ENCODE measurements at regions of chr2 and their contacts with region 1.

Region 1: DNA sequence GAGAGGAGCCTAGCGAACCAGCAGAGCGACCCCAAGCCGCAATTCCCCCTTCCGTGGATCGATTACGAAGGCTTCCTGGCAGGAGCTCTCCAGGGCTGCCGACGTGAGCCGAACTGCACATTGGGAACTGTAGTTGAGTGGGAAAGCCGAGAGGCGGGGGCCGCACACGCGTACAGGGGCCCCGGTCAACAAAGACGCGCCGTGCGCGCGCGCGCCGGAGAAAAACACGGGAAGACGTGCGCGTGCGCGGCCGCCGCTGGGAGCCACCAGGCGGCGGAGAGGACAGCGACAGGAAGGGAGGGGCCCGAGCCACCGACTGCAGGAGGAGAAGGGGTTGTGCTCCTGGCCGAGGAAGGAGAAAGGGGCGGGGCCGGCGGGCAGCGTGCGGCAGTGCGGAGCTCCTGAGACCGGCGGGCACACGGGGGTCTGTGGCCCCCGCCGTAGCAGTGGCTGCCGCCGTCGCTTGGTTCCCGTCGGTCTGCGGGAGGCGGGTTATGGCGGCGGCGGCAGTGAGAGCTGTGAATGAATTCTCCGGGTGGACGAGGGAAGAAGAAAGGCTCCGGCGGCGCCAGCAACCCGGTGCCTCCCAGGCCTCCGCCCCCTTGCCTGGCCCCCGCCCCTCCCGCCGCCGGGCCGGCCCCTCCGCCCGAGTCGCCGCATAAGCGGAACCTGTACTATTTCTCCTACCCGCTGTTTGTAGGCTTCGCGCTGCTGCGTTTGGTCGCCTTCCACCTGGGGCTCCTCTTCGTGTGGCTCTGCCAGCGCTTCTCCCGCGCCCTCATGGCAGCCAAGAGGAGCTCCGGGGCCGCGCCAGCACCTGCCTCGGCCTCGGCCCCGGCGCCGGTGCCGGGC is at the start of gene SPAST:
- DNase-seq: peak; percentile 99
- H3K4me3 Mint-ChIP-seq: peak within 1 kb of the TSS; percentile 97
- H3K27ac Mint-ChIP-seq: peak within 1 kb of the TSS; percentile 95
- H3K4me1 Mint-ChIP-seq: peaks cover 21% of the 10 kb centered on the region
- H3K27me3 Mint-ChIP-seq: peaks cover 2% of the 10 kb centered on the region
- total RNA-seq, gene SPAST: 19.5 and 20.9 TPM in 2 replicates

Region 2: DNA sequence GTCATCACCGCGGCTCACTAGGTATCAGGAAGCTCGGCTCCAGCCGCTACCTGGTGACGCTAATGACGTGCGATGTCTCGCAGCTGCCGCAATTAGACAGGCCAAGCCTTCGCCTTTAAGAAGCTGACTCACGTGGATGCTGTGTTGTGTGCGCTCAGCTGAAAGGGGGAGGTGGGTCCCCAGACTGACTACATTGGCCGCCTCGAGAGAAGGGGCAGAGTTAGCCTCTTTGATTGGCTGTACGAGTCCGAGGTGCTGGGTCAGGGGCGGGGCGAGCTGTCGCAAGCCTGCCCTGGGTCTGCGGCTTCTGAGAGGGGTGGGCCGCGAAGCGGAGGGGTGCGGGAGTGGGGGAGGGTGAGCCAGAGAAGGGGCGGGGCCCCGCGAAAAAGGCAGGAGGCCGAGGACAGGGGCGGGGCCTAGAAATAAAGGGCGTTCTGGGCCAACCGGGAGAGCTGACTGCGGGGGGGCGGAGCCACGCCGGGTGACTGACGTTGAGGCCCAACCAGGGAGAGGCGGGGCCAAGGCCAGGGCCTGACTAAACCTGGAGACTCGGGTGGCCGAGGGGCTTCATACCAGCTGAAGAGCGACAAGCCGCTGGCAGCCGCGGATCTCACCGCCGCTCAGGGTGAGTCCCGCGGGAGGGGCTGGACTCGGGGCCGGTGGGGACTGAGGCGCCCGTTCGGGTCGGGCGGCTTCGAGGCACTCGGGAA is 1916.9 kb before region 1 on chr2 and contains the start of gene YPEL5:
- intact Hi-C with region 1: loop called (anchors 5 kb)
- DNase-seq: peak; percentile 100
- H3K4me3 Mint-ChIP-seq: peak within 1 kb of the TSS; percentile 87
- H3K27ac Mint-ChIP-seq: peak within 1 kb of the TSS; percentile 97
- H3K4me1 Mint-ChIP-seq: peaks cover 32% of the 10 kb centered on the region
- H3K27me3 Mint-ChIP-seq: no peaks in the 10 kb centered on the region
- total RNA-seq, gene YPEL5: 16.8 and 19.6 TPM in 2 replicates

Region 3: DNA sequence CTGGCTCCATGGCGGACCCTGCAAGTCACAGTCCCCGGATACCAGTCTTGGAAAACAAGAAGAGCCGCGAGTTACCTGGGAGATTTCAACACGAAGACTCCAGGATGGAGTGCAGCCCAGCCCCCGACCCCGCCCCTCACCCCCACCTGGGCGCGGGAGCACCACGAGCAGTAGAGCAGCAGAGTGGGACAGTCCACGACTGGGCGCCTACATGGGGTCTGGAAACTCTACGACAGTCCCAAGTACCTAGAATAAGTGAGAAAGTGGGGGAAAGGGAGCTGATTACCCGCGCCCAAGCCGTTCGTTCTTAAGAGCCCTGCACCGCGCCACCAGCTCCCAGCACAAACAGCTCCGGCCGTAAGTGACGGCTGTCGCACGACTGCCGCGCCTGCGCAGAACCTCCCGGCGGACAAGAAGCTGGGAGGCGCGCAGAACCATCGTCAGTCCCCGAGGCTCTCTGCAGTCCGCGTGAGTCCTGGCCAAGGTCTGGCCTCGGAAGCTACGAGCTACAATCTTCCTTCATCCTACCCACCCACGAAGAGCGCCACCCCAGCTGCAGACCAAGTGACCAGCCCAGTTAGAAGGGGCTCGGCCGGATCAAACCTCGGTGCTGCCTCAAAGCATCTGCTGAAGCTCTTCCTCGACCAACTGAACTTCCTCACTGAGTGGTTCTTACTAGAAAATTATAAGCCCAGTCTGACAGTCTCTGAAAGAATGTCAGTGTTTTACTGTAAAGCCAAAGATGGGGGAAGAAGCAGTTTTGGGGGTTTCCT is 23.9 kb before region 1 on chr2 and contains the start of gene DPY30:
- intact Hi-C with region 1: loop called (anchors 1 kb)
- DNase-seq: peak; percentile 97
- H3K4me3 Mint-ChIP-seq: peak within 1 kb of the TSS; percentile 97
- H3K27ac Mint-ChIP-seq: peak within 1 kb of the TSS; percentile 92
- H3K4me1 Mint-ChIP-seq: peaks cover 14% of the 10 kb centered on the region
- H3K27me3 Mint-ChIP-seq: no peaks in the 10 kb centered on the region
- total RNA-seq, gene DPY30: 71.8 and 74.4 TPM in 2 replicates

Region 4: GRCh38 chr2:32135409-32135808 is 71.9 kb after region 1 on chr2:
- intact Hi-C with region 1: no loop called
- DNase-seq: peak; percentile 53
- H3K4me3 Mint-ChIP-seq: no peak overlapping the region
- H3K27ac Mint-ChIP-seq: no peak overlapping the region
- H3K4me1 Mint-ChIP-seq: peaks cover 2% of the 10 kb centered on the region
- H3K27me3 Mint-ChIP-seq: no peaks in the 10 kb centered on the region

Region 5: GRCh38 chr2:32168513-32168912 is 105.0 kb after region 1 on chr2:
- intact Hi-C with region 1: loop called (anchors 1 kb)
- DNase-seq: no peak
- H3K4me3 Mint-ChIP-seq: no peak overlapping the region
- H3K27ac Mint-ChIP-seq: no peak overlapping the region
- H3K4me1 Mint-ChIP-seq: peaks cover 33% of the 10 kb centered on the region
- H3K27me3 Mint-ChIP-seq: no peaks in the 10 kb centered on the region

Region 6: GRCh38 chr2:32277674-32278482 is 214.3 kb after region 1 on chr2 and contains the start of gene YIPF4:
- intact Hi-C with region 1: loop called (anchors 2 kb)
- DNase-seq: peak; percentile 97
- H3K4me3 Mint-ChIP-seq: peak within 1 kb of the TSS; percentile 92
- H3K27ac Mint-ChIP-seq: peak within 1 kb of the TSS; percentile 89
- H3K4me1 Mint-ChIP-seq: peaks cover 18% of the 10 kb centered on the region
- H3K27me3 Mint-ChIP-seq: peaks cover 7% of the 10 kb centered on the region
- total RNA-seq, gene YIPF4: 34.5 and 37.9 TPM in 2 replicates

Region 7: GRCh38 chr2:32356735-32357644 is 293.5 kb after region 1 on chr2 and contains the start of gene BIRC6:
- intact Hi-C with region 1: loop called (anchors 1 kb)
- DNase-seq: peak; percentile 98
- H3K4me3 Mint-ChIP-seq: peak within 1 kb of the TSS; percentile 92
- H3K27ac Mint-ChIP-seq: peak within 1 kb of the TSS; percentile 96
- H3K4me1 Mint-ChIP-seq: peaks cover 31% of the 10 kb centered on the region
- H3K27me3 Mint-ChIP-seq: no peaks in the 10 kb centered on the region
- total RNA-seq, gene BIRC6: 101 and 105 TPM in 2 replicates

Region 8: DNA sequence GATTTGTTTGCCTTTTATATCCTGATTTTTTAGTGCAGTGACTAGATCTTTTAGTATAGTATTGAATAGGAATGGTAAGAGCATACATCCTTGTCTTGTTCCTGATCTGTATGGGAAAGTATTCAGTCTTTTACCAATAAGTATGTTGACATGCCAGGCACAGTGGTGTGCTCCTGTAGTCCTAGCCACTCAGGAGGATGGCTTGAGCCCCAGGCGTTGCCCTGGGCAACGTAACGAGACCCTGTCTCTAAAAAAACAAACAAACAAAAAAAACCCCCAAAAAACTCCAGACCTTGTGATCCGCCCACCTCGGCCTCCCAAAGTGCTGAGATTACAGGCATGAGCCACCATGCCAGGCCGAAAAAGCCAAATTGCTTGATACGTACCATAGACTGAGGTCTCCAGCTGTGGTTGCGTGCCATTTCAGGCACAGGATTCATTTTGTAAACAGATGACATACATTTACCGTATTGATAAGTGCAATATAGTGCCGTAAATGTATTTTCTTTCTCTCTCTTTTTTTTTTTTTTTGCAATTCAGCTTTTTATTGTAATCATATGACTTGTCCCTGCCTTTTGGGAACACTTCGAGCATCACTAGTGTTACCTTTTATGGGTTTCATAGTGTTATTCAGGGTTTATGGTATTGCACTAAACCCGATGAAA is 311.8 kb after region 1 on chr2:
- intact Hi-C with region 1: no loop called
- DNase-seq: no peak
- H3K4me3 Mint-ChIP-seq: no peak overlapping the region
- H3K27ac Mint-ChIP-seq: peak overlapping the region; percentile 20
- H3K4me1 Mint-ChIP-seq: peaks cover 19% of the 10 kb centered on the region
- H3K27me3 Mint-ChIP-seq: no peaks in the 10 kb centered on the region

Measured in activated CD4-positive, alpha-beta T cell treated with anti-CD3 and anti-CD28 coated beads, Interleukin-2, amount 10 ng/mL, durations not matched to agents 24 days and 14 days (primary cell).